ENCODE measurements at regions of chr3 and their contacts with region 1.

Region 1: GRCh38 chr3:107235928-107236315 is 141.3 kb upstream of the CCDC54 start:
- DNase-seq: peak; percentile 20
- H3K4me3 ChIP-seq: peak overlapping the region; percentile 6 to 56 (median 32)
- H3K27ac ChIP-seq: peak overlapping the region; percentile 20 to 59 (median 52)
- H3K4me1 ChIP-seq: peaks cover 0 to 21% (median 3%) of the 10 kb centered on the region in 4 donors
- H3K27me3 ChIP-seq: no peaks in the 10 kb centered on the region
- CTCF ChIP-seq: peak; percentile 82 to 93 (median 87)
- EP300 ChIP-seq: no peak
- POLR2A ChIP-seq: no peak

Region 2: GRCh38 chr3:107429320-107430181 is 193.6 kb after region 1 on chr3:
- in situ Hi-C with region 1: no loop called
- intact Hi-C with region 1: loop called (anchors 5 kb)
- DNase-seq: peak; percentile 75
- H3K4me3 ChIP-seq: peak overlapping the region; percentile 14 to 96 (median 44)
- H3K27ac ChIP-seq: peak overlapping the region; percentile 91 to 98 (median 94)
- H3K4me1 ChIP-seq: peaks cover 0 to 29% (median 15%) of the 10 kb centered on the region in 4 donors
- H3K27me3 ChIP-seq: no peaks in the 10 kb centered on the region
- CTCF ChIP-seq: peak; percentile 79 to 90 (median 86)
- EP300 ChIP-seq: no peak
- POLR2A ChIP-seq: no peak

Region 3: DNA sequence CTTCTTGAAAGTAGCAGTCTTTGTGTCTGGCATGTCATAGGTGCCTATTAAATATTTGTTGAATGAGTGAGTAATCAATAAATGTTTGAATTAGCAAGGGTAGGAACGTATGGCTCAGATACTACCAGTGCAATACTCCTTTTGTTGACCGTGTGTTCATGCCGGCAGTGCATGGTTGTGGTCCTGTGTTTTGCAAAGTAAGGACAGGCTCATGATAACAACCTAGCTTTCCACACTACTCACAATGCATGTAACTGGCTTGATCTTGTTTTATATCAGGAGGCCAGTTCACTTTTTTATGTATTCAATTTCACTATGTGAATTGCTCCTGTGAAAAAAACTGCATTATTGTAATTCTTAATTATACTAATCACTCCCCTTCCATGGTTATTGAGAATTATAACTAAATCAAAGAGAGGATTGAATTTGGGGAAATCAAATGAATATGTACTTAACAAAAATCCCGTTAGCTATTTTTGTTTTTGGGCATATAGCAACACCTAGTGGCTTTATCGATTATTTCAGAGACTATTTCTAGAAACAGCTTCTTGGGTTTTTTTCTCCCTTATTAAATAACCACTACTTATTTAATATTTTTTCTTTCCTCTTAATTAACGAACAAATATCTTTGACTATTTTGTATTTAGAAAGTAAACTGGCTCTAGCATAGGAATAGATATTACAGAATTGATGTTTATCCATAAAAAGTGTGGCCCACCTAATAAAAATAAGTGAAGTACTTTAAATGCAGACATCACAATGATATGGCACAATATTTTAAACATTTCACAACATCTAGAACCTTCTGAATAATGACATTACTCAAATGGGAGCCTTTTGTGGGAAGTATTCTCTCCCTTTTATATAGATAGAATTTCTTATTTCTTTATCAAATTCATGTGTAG is 505.3 kb after region 1 on chr3:
- in situ Hi-C with region 1: loop called in 1 of 4 experiments (anchors 25 kb)
- intact Hi-C with region 1: loop called (anchors 5 kb)
- DNase-seq: no peak
- H3K4me3 ChIP-seq: no peak overlapping the region
- H3K27ac ChIP-seq: no peak overlapping the region
- H3K4me1 ChIP-seq: no peaks in the 10 kb centered on the region
- H3K27me3 ChIP-seq: no peaks in the 10 kb centered on the region
- CTCF ChIP-seq: peak; percentile 45 to 57 (median 46)
- EP300 ChIP-seq: no peak
- POLR2A ChIP-seq: no peak

Region 4: GRCh38 chr3:107846279-107846852 is 610.4 kb after region 1 on chr3:
- in situ Hi-C with region 1: loop called in 1 of 4 experiments (anchors 10 kb)
- intact Hi-C with region 1: no loop called
- DNase-seq: peak; percentile 66
- H3K4me3 ChIP-seq: no peak overlapping the region
- H3K27ac ChIP-seq: no peak overlapping the region
- H3K4me1 ChIP-seq: no peaks in the 10 kb centered on the region
- H3K27me3 ChIP-seq: no peaks in the 10 kb centered on the region
- CTCF ChIP-seq: peak; percentile 33 to 49 (median 48)
- EP300 ChIP-seq: no peak
- POLR2A ChIP-seq: no peak